Activated T-helper 2 cell treated with anti-CD3 and anti-CD28 coated beads, Interferon-gamma antibody, Interleukin-2, Interleukin-4, amounts not matched to agents 10 μg/mL and 5 μg/mL and 100 μg/mL, durations not matched to agents 14 hours and 24 hours and 36 hours (primary cell): ENCODE measurements at regions of chr7 and their contacts with region 1.

Region 1: DNA sequence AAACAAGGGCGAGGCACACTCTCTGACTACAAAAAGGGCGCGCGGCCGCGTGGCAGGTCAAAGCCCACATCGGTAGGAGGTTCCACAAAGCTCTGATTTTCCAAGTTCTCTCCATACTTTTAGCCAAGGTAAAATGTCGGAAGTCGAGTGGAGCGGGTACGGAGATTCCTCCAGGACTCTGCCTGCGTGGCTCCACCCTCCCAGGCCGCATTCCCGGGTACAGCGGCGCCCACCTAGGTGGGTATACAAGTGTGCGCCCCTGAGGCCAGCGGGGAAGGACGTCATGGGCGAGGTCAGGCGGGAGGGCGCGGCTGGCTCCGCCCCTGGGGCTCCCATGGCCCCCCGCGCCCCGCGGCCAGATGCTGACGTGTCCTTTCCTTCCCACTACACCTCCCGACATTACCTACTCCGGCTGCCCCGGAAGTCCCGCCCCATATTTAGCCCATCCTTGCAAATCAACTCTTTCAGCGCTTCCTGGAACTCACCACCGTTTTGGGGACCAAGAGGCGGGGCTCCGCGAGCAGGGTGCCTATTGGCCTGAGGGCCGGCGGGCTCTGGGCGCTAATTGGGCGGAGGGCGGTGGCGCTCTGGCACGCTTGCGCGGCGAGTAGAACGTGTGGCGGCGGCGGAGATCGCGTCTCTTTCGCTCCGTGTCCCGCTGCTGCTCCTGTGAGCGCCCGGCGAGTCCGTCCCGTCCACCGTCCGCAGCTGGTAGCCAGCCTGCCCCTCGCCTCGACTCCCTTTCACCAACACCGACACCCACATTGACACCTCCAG is at the start of gene SND1:
- DNase-seq: peak; percentile 99
- H3K4me3 Mint-ChIP-seq: peak within 1 kb of the TSS; percentile 100
- H3K27ac Mint-ChIP-seq: peak within 1 kb of the TSS; percentile 99
- H3K4me1 Mint-ChIP-seq: peaks cover 31% of the 10 kb centered on the region
- H3K27me3 Mint-ChIP-seq: peaks cover 5% of the 10 kb centered on the region
- total RNA-seq, gene SND1: 311 TPM in 2 replicates

Region 2: DNA sequence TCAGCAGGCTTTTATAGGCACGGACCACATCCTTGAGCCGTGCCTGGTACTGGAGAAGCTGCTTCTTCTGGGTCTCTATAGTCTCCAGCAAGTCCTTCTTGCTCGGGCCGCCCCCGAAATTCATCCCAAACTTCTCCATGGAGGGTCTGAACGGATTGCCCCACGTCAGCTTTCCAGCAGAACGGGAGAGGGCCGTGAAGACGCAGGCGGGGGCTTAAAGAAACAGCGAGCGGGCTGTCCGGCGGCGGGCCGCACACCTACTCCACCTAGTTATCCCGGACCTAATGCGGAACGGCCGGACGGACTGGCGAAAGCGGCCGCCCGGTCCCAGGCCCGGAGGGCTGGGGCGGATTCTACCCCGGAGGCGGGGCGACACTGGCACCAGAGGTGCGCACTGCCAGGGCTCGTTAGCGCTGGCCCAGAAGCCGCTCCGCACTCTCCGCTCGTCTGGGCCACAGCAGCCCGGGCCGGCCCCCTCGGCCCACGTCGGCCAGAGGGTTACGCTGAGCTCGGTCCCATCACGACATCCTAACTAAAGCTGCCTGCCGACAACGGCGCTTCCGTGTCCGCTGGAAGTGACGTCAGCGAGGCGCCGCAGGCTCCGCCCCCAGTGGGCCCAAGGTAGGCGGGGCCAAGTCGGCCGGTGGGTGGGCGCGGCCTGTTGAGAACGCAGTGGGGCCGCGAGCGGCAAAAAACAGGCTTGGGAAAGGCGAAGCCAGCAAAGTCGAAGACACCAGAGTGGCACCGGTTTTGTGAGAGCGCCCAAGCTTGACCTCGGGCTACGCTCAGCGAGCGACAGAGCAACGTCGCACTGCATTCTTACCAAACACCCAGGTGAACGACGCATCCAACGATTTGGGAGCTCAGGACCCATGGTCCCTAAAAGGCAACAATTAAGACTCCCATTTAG is 66.4 kb before region 1 on chr7 and contains the start of gene GCC1:
- intact Hi-C with region 1: loop called (anchors 1 kb)
- DNase-seq: peak; percentile 92
- H3K4me3 Mint-ChIP-seq: peak within 1 kb of the TSS; percentile 92
- H3K27ac Mint-ChIP-seq: peak within 1 kb of the TSS; percentile 87
- H3K4me1 Mint-ChIP-seq: peaks cover 48% of the 10 kb centered on the region
- H3K27me3 Mint-ChIP-seq: no peaks in the 10 kb centered on the region
- total RNA-seq, gene GCC1: 14.4 and 15.1 TPM in 2 replicates

Region 3: GRCh38 chr7:129224251-129225205 is 1572.8 kb after region 1 on chr7 and contains the start of gene AHCYL2:
- intact Hi-C with region 1: loop called (anchors 2 kb)
- DNase-seq: peak; percentile 94
- H3K4me3 Mint-ChIP-seq: peak within 1 kb of the TSS; percentile 94
- H3K27ac Mint-ChIP-seq: peak within 1 kb of the TSS; percentile 96
- H3K4me1 Mint-ChIP-seq: peaks cover 22% of the 10 kb centered on the region
- H3K27me3 Mint-ChIP-seq: no peaks in the 10 kb centered on the region
- total RNA-seq, gene AHCYL2: 14.7 and 15.1 TPM in 2 replicates